Endothelial cell of umbilical vein (primary cell): ENCODE measurements at regions of chr5 and their contacts with region 1.

Region 1: GRCh38 chr5:142324871-142325724 is at the start of gene SPRY4:
- DNase-seq: peak; percentile 98
- H3K4me3 ChIP-seq: peak within 1 kb of the TSS; percentile 76 to 89 (median 81)
- H3K27ac ChIP-seq: peak within 1 kb of the TSS; percentile 88
- H3K4me1 ChIP-seq: peaks cover 48% of the 10 kb centered on the region
- H3K27me3 ChIP-seq: no peaks in the 10 kb centered on the region
- CTCF ChIP-seq: no peak
- POLR2A ChIP-seq: peak; percentile 97
- total RNA-seq, gene SPRY4: 33.9 and 49.5 TPM in 2 replicates

Region 2: GRCh38 chr5:142356716-142357473 is 31.8 kb after region 1 on chr5:
- CTCF ChIA-PET with region 1: interaction called, 32 read pairs
- POLR2A ChIA-PET with region 1: interaction called, 5 read pairs
- dilution Hi-C with region 1: no loop called
- intact Hi-C with region 1: loop called (anchors 1 kb)
- DNase-seq: peak; percentile 94
- H3K4me3 ChIP-seq: peak overlapping the region in 1 of 3 experiments; percentile 54
- H3K27ac ChIP-seq: peak overlapping the region; percentile 74
- H3K4me1 ChIP-seq: peaks cover 31% of the 10 kb centered on the region
- H3K27me3 ChIP-seq: no peaks in the 10 kb centered on the region
- CTCF ChIP-seq: no peak
- POLR2A ChIP-seq: peak; percentile 47

Region 3: DNA sequence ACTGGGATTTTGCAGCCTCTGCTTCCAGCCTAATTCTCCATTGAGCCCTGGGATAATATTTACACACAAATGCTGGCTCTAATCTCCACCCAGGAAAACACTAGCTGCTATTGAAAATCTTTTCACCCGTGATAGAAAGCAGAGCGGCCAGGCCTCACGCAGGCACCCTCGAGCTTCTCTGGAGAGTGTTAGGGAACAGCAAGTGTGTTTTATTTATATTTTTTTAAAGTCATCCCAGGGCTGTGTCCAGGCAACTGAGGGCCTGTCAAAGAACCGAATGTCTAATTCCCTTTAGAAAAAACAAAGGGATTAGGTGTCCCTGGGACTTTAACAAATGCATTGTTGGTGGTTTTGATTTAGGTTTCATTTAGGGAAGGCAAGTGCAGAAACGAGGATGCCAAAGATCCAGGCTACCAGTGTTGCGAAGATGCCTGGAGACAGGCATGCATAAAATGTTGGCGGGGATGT is 50.9 kb after region 1 on chr5:
- CTCF ChIA-PET with region 1: no interaction called
- POLR2A ChIA-PET with region 1: no interaction called
- dilution Hi-C with region 1: no loop called
- intact Hi-C with region 1: no loop called
- DNase-seq: no peak
- H3K4me3 ChIP-seq: no peak overlapping the region
- H3K27ac ChIP-seq: no peak overlapping the region
- H3K4me1 ChIP-seq: no peaks in the 10 kb centered on the region
- H3K27me3 ChIP-seq: no peaks in the 10 kb centered on the region
- CTCF ChIP-seq: no peak
- POLR2A ChIP-seq: no peak

Region 4: GRCh38 chr5:142446131-142446959 is 121.2 kb after region 1 on chr5:
- CTCF ChIA-PET with region 1: interaction called, 5 read pairs
- POLR2A ChIA-PET with region 1: no interaction called
- dilution Hi-C with region 1: no loop called
- intact Hi-C with region 1: loop called (anchors 1 kb)
- DNase-seq: peak; percentile 67
- H3K4me3 ChIP-seq: peak overlapping the region in 1 of 3 experiments; percentile 5
- H3K27ac ChIP-seq: peak overlapping the region; percentile 88
- H3K4me1 ChIP-seq: peaks cover 20% of the 10 kb centered on the region
- H3K27me3 ChIP-seq: no peaks in the 10 kb centered on the region
- CTCF ChIP-seq: no peak
- POLR2A ChIP-seq: peak; percentile 64